Breast epithelium (tissue), 4 donors: ENCODE measurements at regions of chr19 and their contacts with region 1.

Region 1: GRCh38 chr19:51607920-51608562 is 22.2 kb downstream of the SIGLEC5 start:
- DNase-seq: peak in 1 of 2 donors; percentile 84
- H3K4me3 ChIP-seq: no peak overlapping the region
- H3K27ac ChIP-seq: no peak overlapping the region
- H3K4me1 ChIP-seq: no peaks in the 10 kb centered on the region
- H3K27me3 ChIP-seq: no peaks in the 10 kb centered on the region
- CTCF ChIP-seq: peak in 2 of 3 donors; percentile 40 to 48
- POLR2A ChIP-seq: no peak

Region 2: GRCh38 chr19:51514866-51515481 is 93.1 kb before region 1 on chr19:
- intact Hi-C with region 1: no loop called
- DNase-seq: no peak
- H3K4me3 ChIP-seq: no peak overlapping the region
- H3K27ac ChIP-seq: no peak overlapping the region
- H3K4me1 ChIP-seq: no peaks in the 10 kb centered on the region
- H3K27me3 ChIP-seq: peaks cover 0 to 19% of the 10 kb centered on the region in 2 donors
- CTCF ChIP-seq: peak; percentile 50 to 67 (median 51)
- POLR2A ChIP-seq: no peak

Region 3: GRCh38 chr19:53541971-53542370 is 1933.9 kb after region 1 on chr19:
- intact Hi-C with region 1: loop called (anchors 5 kb)
- DNase-seq: no peak
- H3K4me3 ChIP-seq: no peak overlapping the region
- H3K27ac ChIP-seq: no peak overlapping the region
- H3K4me1 ChIP-seq: no peaks in the 10 kb centered on the region
- H3K27me3 ChIP-seq: no peaks in the 10 kb centered on the region
- CTCF ChIP-seq: no peak
- POLR2A ChIP-seq: no peak